ENCODE measurements at regions of chr9 and their contacts with region 1.

Region 1: GRCh38 chr9:127586537-127586936 is 25.5 kb upstream of the STXBP1 start:
- DNase-seq: peak; percentile 75
- ATAC-seq: peak; percentile 80
- H3K4me3 Mint-ChIP-seq: no peak overlapping the region
- H3K27ac Mint-ChIP-seq: peak overlapping the region; percentile 39
- H3K4me1 Mint-ChIP-seq: peaks cover 27% of the 10 kb centered on the region
- H3K27me3 Mint-ChIP-seq: peaks cover 12% of the 10 kb centered on the region

Region 2: GRCh38 chr9:127503947-127504782 is 82.4 kb before region 1 on chr9:
- CTCF ChIA-PET with region 1: interaction called, 40 read pairs
- POLR2A ChIA-PET with region 1: no interaction called
- DNase-seq: peak; percentile 88
- ATAC-seq: peak; percentile 91
- H3K4me3 Mint-ChIP-seq: no peak overlapping the region
- H3K27ac Mint-ChIP-seq: peak overlapping the region; percentile 57
- H3K4me1 Mint-ChIP-seq: peaks cover 2% of the 10 kb centered on the region
- H3K27me3 Mint-ChIP-seq: no peaks in the 10 kb centered on the region

Region 3: DNA sequence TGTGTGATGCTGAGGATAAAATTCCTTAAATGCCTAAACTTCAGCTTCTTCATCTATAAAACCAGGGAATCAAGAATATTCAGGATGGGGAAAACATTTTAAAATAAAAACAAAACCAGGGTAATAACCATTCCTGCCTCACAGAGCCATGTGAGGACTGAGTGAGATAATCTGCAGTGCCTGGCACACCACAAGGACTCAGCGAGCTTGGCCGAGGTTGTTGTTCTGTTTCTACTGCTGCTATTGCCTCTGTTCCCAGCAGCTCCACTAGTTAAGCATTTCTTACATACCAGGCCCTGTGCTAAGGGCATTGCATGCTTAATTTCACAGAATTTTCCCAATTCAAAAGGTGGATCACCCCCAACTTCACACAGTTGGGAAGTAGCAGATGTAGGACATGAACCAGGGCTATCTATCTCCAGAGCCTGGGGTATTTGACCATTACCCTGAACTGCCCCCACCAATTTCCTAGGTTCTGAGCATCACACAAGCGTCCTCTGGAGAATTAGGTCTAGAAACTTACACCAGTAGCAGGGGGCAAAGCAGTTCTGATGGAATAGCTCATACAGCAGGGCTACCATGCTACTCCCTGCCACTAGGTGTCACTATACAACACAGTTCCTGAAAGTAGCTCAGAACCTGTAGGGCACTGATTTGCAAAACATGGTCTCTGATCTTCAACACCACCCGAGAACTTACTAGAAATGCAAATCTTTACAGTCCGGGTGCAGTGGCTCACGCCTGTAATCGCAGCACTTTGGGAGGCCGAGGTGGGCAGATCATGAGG is 60.9 kb before region 1 on chr9:
- CTCF ChIA-PET with region 1: interaction called, 43 read pairs
- POLR2A ChIA-PET with region 1: no interaction called
- DNase-seq: peak; percentile 59
- ATAC-seq: peak; percentile 50
- H3K4me3 Mint-ChIP-seq: no peak overlapping the region
- H3K27ac Mint-ChIP-seq: no peak overlapping the region
- H3K4me1 Mint-ChIP-seq: peaks cover 18% of the 10 kb centered on the region
- H3K27me3 Mint-ChIP-seq: no peaks in the 10 kb centered on the region

Region 4: DNA sequence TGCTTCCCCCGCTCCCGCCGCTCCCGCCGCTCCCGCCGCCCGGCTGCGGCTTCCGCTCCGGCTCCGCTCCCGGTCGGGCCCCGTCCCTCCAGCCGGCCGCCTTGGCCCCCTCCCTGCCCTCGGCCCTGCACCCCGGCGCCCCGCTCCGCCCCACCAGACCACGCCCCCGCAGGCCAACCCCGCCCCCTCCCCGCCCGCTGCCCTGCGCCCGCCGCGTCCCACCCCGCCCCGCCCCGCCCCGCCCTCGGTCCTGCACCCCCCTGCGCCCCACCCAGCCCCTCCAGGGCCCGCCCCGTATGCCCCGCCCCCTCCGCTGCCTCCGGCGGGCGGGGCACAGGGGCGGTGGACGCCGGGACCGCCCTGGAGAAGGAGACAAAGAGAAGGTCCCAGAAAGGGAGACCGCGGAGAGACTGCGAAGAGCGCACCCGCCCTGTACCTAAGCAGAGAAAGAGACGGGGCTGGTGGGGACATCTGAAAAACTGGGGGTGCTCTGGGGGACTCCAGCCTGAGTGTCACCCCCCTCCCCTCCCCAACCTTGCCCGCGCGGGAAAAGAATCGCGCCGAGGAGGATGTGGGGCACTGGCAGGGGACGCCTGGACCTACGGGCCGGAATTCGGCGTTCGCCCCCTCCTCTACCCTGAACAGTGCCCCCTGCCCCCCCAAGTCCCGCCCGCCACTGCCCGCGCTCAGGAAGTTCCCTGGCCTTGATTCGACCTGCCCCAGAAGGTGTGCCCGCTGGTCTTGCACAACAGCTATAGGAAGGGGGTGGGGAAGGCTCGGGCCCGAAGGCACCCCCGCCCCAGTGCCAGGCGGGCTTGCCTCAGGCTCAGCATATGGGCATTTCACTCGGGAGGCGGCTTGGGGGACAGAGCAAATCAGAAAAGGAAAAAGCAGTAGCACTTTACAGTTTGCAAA is 17.3 kb before region 1 on chr9:
- CTCF ChIA-PET with region 1: interaction called, 11 read pairs
- POLR2A ChIA-PET with region 1: interaction called, 5 read pairs
- DNase-seq: peak; percentile 88
- ATAC-seq: peak; percentile 81
- H3K4me3 Mint-ChIP-seq: peak overlapping the region; percentile 86
- H3K27ac Mint-ChIP-seq: peak overlapping the region; percentile 92
- H3K4me1 Mint-ChIP-seq: peaks cover 69% of the 10 kb centered on the region
- H3K27me3 Mint-ChIP-seq: no peaks in the 10 kb centered on the region

Region 5: DNA sequence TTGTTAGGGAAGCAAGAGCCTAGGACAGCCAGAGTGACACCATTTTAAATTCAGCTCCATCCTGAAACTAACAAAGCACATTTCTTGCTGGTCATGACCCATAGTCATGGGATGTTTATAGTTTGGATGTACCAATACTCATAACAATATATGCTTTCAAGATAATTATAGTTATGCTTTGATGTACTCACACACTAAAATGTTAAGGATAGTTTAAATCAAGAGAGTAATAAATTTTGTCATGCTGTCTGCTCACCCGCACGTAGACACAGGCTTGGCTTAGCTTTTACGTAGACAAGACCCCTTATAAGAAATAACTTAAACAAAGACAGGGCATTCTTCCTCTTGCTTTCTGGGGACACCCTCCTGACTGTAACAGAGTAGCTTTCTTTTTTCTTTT is 16.7 kb after region 1 on chr9:
- CTCF ChIA-PET with region 1: interaction called, 11 read pairs
- POLR2A ChIA-PET with region 1: interaction called, 3 read pairs
- DNase-seq: no peak
- ATAC-seq: no peak
- H3K4me3 Mint-ChIP-seq: no peak overlapping the region
- H3K27ac Mint-ChIP-seq: no peak overlapping the region
- H3K4me1 Mint-ChIP-seq: peaks cover 11% of the 10 kb centered on the region
- H3K27me3 Mint-ChIP-seq: peaks cover 8% of the 10 kb centered on the region

Region 6: DNA sequence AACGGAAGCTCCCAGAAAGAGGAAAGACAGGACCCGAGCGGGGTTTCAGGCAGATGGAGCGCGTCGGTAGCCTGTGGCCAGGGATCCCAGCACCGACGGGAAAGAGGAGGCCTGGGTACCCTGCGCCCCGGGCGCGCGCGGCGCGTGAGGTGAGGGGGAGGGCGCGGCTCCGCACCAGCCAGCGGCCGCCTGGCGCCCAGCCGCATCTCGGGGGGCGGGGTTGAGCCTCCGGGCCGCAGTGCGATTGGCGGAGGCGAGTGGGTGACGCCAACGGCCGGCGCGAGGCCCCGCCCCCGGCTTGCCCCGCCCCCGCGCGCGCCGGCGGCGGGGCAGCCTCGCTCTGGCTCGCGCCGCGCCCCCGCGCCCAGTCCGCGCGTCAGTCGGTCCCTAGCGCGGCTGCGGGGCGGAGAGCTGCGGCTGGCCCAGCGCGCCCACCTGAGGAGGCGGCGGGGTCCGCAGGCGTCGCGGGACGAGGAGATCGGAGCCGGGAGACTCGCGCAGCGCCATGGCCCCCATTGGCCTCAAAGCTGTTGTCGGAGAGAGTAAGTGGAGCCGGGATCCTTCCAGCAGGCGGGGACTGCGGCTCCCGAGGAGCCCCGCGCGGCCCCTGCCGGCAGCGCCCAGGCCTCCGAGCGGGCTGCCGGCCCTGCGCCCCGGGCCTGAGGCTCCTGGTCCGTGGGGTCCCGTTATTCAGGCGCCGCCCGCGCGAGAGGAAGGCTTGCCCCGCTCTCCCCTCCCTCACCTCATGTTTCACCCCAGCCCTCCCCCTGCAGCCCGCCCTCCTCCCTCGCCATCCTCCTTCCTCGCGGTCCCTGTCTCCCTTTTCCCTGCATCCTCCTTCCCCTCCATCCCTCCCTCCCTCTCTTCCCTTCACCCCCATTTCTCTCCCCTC is 25.6 kb after region 1 on chr9 and contains the start of gene STXBP1:
- CTCF ChIA-PET with region 1: interaction called, 11 read pairs
- POLR2A ChIA-PET with region 1: no interaction called
- DNase-seq: peak; percentile 89
- ATAC-seq: peak; percentile 82
- H3K4me3 Mint-ChIP-seq: peak within 1 kb of the TSS; percentile 84
- H3K27ac Mint-ChIP-seq: peak within 1 kb of the TSS; percentile 64
- H3K4me1 Mint-ChIP-seq: peaks cover 35% of the 10 kb centered on the region
- H3K27me3 Mint-ChIP-seq: peaks cover 34% of the 10 kb centered on the region
- total RNA-seq, gene STXBP1: 24.2 to 25.3 TPM

Region 7: DNA sequence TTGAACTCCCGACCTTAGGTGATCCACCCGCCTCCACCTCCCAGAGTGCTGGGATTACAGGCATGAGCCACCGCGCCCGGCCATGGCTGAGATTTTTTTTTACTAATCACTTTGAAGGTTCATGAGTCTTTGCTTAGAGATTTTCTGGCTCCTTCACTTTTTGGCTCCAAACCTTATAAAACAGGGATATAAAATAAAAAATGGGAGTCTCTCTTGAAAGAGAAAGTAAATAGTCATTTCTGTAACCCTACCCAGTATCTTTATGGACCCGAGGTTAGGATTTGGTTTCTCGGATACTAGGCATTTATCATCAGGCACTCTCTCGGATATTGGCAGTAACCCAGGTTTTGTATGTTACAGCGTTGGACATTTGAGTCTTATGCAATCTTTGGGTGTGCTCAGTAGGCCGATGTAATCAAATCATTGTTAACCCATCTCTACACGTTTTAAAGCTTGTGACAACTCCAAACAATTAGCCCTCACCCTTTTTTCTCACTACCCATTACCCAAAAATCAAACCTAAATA is 50.8 kb after region 1 on chr9:
- CTCF ChIA-PET with region 1: no interaction called
- POLR2A ChIA-PET with region 1: no interaction called
- DNase-seq: no peak
- ATAC-seq: no peak
- H3K4me3 Mint-ChIP-seq: no peak overlapping the region
- H3K27ac Mint-ChIP-seq: no peak overlapping the region
- H3K4me1 Mint-ChIP-seq: peaks cover 12% of the 10 kb centered on the region
- H3K27me3 Mint-ChIP-seq: no peaks in the 10 kb centered on the region

Measured in activated CD8-positive, alpha-beta T cell treated with anti-CD3 and anti-CD28 coated beads, Interleukin-2, amount 10 ng/mL, durations not matched to agents 7 days and 5 days (primary cell).